ENCODE measurements at regions of chr2 and their contacts with region 1.

Region 1: GRCh38 chr2:223815186-223815883 is 22.0 kb downstream of the AP1S3 start:
- DNase-seq: peak; percentile 98
- ATAC-seq: peak; percentile 75
- H3K4me3 ChIP-seq: peak overlapping the region; percentile 29; the same call in 1 of the 2 replicates
- H3K27ac ChIP-seq: peak overlapping the region; percentile 85
- H3K4me1 ChIP-seq: peaks cover 58% of the 10 kb centered on the region
- H3K27me3 ChIP-seq: no peaks in the 10 kb centered on the region
- CTCF ChIP-seq: no peak

Region 2: GRCh38 chr2:223837287-223838061 is 22.1 kb after region 1 on chr2 and contains the start of gene AP1S3:
- CTCF ChIA-PET with region 1: no interaction called
- POLR2A ChIA-PET with region 1: interaction called, 5 read pairs
- intact Hi-C with region 1: loop called (anchors 1 kb)
- DNase-seq: peak; percentile 84
- ATAC-seq: peak; percentile 87
- H3K4me3 ChIP-seq: peak within 1 kb of the TSS; percentile 95
- H3K27ac ChIP-seq: peak within 1 kb of the TSS; percentile 71
- H3K4me1 ChIP-seq: peaks cover 27% of the 10 kb centered on the region; the same call in 1 of the 2 replicates
- H3K27me3 ChIP-seq: no peaks in the 10 kb centered on the region
- CTCF ChIP-seq: no peak
- total RNA-seq, gene AP1S3: 34.3 and 37.6 TPM in 2 replicates

Measured in PC-3 (cell line).